Body of pancreas (tissue), 4 donors: ENCODE measurements at regions of chr1 and their contacts with region 1.

Region 1: GRCh38 chr1:205805082-205805712 is 7.8 kb downstream of the SLC41A1 start:
- DNase-seq: no peak
- ATAC-seq: no peak
- H3K4me3 ChIP-seq: no peak overlapping the region
- H3K27ac ChIP-seq: peak overlapping the region in 1 of 4 donors; percentile 20
- H3K4me1 ChIP-seq: peaks cover 94% of the 10 kb centered on the region
- H3K27me3 ChIP-seq: no peaks in the 10 kb centered on the region
- CTCF ChIP-seq: no peak
- POLR2A ChIP-seq: no peak

Region 2: GRCh38 chr1:205840146-205840923 is 35.1 kb after region 1 on chr1:
- intact Hi-C with region 1: loop called (anchors 5 kb)
- DNase-seq: no peak
- ATAC-seq: no peak
- H3K4me3 ChIP-seq: no peak overlapping the region
- H3K27ac ChIP-seq: peak overlapping the region in 1 of 4 donors; percentile 4
- H3K4me1 ChIP-seq: peaks cover 46% of the 10 kb centered on the region
- H3K27me3 ChIP-seq: no peaks in the 10 kb centered on the region
- CTCF ChIP-seq: no peak
- POLR2A ChIP-seq: no peak

Region 3: GRCh38 chr1:205878026-205878425 is 72.8 kb after region 1 on chr1:
- intact Hi-C with region 1: no loop called
- DNase-seq: no peak
- ATAC-seq: no peak
- H3K4me3 ChIP-seq: no peak overlapping the region
- H3K27ac ChIP-seq: no peak overlapping the region
- H3K4me1 ChIP-seq: no peaks in the 10 kb centered on the region
- H3K27me3 ChIP-seq: no peaks in the 10 kb centered on the region
- CTCF ChIP-seq: no peak
- POLR2A ChIP-seq: no peak